Aorta (tissue), 5 donors: ENCODE measurements at regions of chr2 and their contacts with region 1.

Region 1: DNA sequence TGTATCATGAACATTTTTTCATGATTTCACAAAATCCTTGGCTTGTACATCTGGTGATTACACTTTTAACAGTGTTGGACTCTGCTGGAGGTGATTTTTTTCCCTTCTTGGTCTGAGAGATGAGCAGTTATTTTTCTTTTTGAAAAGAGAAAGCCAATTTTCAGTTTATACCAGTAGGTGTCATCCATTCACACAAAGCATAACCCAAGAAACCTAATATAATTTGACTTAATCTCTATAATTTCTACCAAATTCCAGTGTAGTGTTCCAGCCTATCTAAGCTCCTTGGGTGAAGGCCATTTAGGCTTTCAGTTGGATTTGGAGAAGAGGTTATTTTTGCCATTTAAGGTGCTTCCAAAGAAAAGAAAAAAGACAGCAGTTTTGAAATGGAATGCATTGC is 7.7 kb upstream of the ICOS start:
- DNase-seq: no peak
- ATAC-seq: peak; percentile 46
- H3K4me3 ChIP-seq: no peak overlapping the region
- H3K27ac ChIP-seq: no peak overlapping the region
- H3K4me1 ChIP-seq: peaks cover 0 to 5% of the 10 kb centered on the region in 2 donors
- H3K27me3 ChIP-seq: no peaks in the 10 kb centered on the region

Region 2: DNA sequence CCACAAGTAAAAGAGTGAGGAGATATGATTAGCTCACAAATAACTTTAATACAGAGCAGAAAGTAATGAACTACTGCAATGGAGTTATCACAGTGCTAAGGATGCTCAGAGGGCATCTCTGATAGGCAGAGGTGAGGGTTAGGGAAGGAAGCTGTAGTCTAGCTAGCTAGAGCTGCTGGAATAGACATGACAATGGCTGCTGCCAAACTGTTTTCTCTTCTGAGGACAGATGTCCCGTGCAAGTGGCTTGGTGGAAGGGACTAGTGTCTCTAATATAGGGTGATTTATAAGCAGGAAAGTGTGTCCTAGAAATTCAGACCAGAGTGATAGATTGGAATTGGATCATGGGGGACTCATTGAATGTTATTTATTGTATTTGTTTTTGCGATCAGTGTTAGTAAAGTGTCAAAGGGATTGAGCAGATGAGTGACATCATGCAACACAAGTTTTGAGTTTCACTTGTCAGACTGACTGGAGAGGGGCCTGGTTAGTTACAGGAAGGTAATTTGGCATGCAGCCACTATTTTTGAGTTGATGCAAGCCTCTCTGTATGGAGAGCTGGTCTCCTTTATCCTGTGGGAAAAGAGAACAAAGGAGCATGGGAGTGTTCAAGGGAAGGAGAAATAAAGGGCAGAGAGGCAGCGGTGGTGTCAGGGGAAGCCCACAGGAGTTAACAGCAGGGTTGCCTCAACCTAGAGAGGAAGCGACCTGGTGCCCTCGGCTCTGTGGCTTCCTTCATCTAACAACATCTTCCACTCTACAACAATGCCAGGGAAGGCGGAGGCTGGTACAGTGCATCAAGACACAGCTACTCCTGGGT is 59.4 kb before region 1 on chr2:
- intact Hi-C with region 1: no loop called
- DNase-seq: no peak
- ATAC-seq: no peak
- H3K4me3 ChIP-seq: no peak overlapping the region
- H3K27ac ChIP-seq: no peak overlapping the region
- H3K4me1 ChIP-seq: no peaks in the 10 kb centered on the region
- H3K27me3 ChIP-seq: no peaks in the 10 kb centered on the region

Region 3: GRCh38 chr2:203960811-203961210 is 32.0 kb after region 1 on chr2:
- intact Hi-C with region 1: no loop called
- DNase-seq: no peak
- ATAC-seq: no peak
- H3K4me3 ChIP-seq: no peak overlapping the region
- H3K27ac ChIP-seq: peak overlapping the region in 1 of 2 donors; percentile 76
- H3K4me1 ChIP-seq: peaks cover 0 to 8% of the 10 kb centered on the region in 2 donors
- H3K27me3 ChIP-seq: no peaks in the 10 kb centered on the region

Region 4: GRCh38 chr2:204249437-204249836 is 320.6 kb after region 1 on chr2:
- intact Hi-C with region 1: loop called in 1 of 2 experiments (anchors 5 kb)
- DNase-seq: no peak
- ATAC-seq: no peak
- H3K4me3 ChIP-seq: no peak overlapping the region
- H3K27ac ChIP-seq: no peak overlapping the region
- H3K4me1 ChIP-seq: peaks cover 0 to 6% of the 10 kb centered on the region in 2 donors
- H3K27me3 ChIP-seq: no peaks in the 10 kb centered on the region